H1 (cell line): ENCODE measurements at regions of chr2 and their contacts with region 1.

Region 1: GRCh38 chr2:233449081-233449901 is 95.0 kb downstream of the DGKD start:
- DNase-seq: peak; percentile 38 to 85
- H3K4me3 ChIP-seq: no peak overlapping the region
- H3K27ac ChIP-seq: no peak overlapping the region
- H3K4me1 ChIP-seq: no peaks in the 10 kb centered on the region; a peak in 1 of 7 replicates
- H3K27me3 ChIP-seq: no peaks in the 10 kb centered on the region
- CTCF ChIP-seq: peak; percentile 79 to 89 (median 83)
- EP300 ChIP-seq: no peak
- POLR2A ChIP-seq: no peak
- RAD21 ChIP-seq: peak; percentile 60 to 78

Region 2: DNA sequence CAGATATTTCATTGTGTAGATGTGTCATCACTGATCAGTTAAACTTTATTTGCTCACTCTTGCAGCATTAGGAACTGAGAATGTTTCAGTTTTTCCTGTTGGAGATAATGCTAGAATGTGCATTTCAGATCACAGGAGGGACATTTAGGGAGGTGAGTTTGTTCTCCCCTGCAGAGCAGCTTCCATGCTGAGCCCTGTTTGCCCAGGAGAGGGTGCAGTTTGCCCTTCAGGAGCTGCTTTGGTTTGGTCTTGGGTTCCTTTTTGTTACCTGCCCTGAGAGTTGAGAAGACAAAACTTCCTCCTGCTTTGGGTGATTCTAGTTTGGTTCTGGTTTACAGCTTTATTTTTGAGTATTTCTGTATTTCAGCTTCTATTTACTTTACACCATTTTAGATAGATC is 45.1 kb before region 1 on chr2:
- CTCF ChIA-PET with region 1: interaction called, 77 read pairs
- POLR2A ChIA-PET with region 1: no interaction called
- DNase-seq: no peak
- H3K4me3 ChIP-seq: no peak overlapping the region
- H3K27ac ChIP-seq: no peak overlapping the region
- H3K4me1 ChIP-seq: peaks cover 5 to 10% (median 6%) of the 10 kb centered on the region in 4 experiments; a peak in 5 of 7 replicates
- H3K27me3 ChIP-seq: no peaks in the 10 kb centered on the region
- CTCF ChIP-seq: peak; percentile 74 to 83 (median 81)
- EP300 ChIP-seq: no peak
- POLR2A ChIP-seq: no peak
- RAD21 ChIP-seq: peak; percentile 74 to 83

Region 3: DNA sequence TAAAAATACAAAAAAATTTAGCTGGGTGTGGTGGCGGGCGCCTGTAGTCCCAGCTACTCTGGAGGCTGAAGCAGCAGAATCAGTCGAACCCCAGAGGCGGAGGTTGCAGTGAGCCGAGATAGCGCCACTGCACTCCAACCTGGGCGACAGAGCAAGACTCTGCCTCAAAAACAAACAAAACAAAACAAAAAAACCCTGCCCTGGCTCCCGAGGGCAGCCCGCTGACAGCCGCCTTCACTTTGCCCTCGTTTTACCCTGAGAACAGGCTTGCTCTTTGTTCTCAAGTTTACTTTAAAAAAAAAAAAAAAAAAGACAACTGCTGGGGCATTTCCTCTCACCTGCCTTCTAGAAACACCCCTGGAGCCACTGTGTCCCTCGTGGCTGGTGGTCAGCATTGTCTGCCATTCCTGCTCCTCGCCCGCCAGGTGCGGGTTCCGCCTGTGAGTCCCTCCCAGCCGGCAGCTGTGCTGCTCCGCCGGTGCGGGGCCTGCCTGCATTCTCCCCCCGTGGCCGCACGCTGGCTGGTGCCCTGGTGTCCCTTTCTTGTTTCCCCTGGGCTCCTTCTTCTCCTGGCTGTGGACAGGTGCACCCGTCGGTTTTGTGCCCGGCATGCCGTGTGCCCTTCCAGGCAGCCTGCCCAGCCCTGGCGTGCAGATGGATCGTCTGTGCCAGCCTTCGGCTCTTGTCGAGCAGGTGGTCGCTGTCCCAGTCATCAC is 11.6 kb after region 1 on chr2:
- CTCF ChIA-PET with region 1: interaction called, 25 read pairs
- POLR2A ChIA-PET with region 1: no interaction called
- DNase-seq: no peak
- H3K4me3 ChIP-seq: no peak overlapping the region
- H3K27ac ChIP-seq: no peak overlapping the region
- H3K4me1 ChIP-seq: no peaks in the 10 kb centered on the region
- H3K27me3 ChIP-seq: no peaks in the 10 kb centered on the region
- CTCF ChIP-seq: no peak
- EP300 ChIP-seq: no peak
- POLR2A ChIP-seq: no peak
- RAD21 ChIP-seq: no peak

Region 4: GRCh38 chr2:233711312-233712008 is 262.2 kb after region 1 on chr2:
- CTCF ChIA-PET with region 1: interaction called, 19 read pairs
- POLR2A ChIA-PET with region 1: no interaction called
- DNase-seq: peak; percentile 50 to 91
- H3K4me3 ChIP-seq: no peak overlapping the region
- H3K27ac ChIP-seq: no peak overlapping the region
- H3K4me1 ChIP-seq: no peaks in the 10 kb centered on the region
- H3K27me3 ChIP-seq: peaks cover 0 to 1% (median 0%) of the 10 kb centered on the region in 4 experiments; a peak in 1 of 7 replicates
- CTCF ChIP-seq: peak; percentile 83 to 91 (median 90)
- EP300 ChIP-seq: no peak
- POLR2A ChIP-seq: no peak
- RAD21 ChIP-seq: peak; percentile 85 to 87